Caco-2 (cell line): ENCODE measurements at regions of chr12 and their contacts with region 1.

Region 1: DNA sequence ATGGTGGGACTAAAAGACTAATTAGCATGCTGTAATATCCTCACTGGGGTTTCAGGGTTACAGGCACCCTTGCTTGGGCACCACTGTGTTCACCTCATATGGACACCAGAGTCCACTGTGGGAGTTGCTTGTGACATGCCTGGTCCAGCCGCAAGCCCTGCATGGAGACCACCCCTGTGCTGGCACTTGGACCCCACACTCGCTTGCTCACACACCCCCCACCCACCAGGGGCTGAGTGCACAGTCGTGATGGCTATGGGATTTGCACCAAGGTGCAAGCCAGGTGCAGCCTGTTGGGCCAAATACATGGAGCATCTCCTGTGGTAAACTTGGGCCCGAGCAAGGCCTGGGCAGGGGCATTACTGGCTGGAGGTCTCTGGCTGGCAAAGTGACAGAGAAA is 129.1 kb downstream of the SYT10 start:
- DNase-seq: no peak
- H3K4me3 ChIP-seq: no peak overlapping the region
- H3K4me3 Mint-ChIP-seq: no peak overlapping the region
- H3K27ac Mint-ChIP-seq: no peak overlapping the region
- H3K4me1 ChIP-seq: peaks cover 29% of the 10 kb centered on the region
- H3K4me1 Mint-ChIP-seq: peaks cover 40% of the 10 kb centered on the region
- H3K27me3 ChIP-seq: no peaks in the 10 kb centered on the region
- H3K27me3 Mint-ChIP-seq: no peaks in the 10 kb centered on the region
- CTCF ChIP-seq: no peak

Region 2: DNA sequence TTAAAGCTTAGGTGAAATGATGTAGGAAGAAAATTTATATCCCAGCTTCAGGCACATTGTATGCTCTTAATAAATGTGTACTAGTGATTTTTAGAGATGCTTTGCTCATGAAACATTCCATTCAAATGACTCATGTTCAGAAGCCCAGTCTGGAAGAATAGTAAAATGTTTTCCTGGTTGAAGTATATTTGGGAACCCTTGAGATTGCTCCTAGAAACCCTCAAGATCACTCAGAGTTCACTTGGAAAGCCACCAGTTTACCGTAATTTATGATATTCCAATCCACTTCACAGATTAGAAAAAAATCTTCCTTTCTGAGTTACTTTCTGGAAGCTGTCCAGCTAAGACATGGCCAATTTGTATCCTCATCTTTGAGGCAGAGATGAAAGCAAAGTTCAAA is 57.3 kb before region 1 on chr12:
- CTCF ChIA-PET with region 1: no interaction called
- POLR2A ChIA-PET with region 1: no interaction called
- intact Hi-C with region 1: loop called (anchors 5 kb)
- DNase-seq: no peak
- H3K4me3 ChIP-seq: no peak overlapping the region
- H3K4me3 Mint-ChIP-seq: no peak overlapping the region
- H3K27ac Mint-ChIP-seq: no peak overlapping the region
- H3K4me1 ChIP-seq: peaks cover 30% of the 10 kb centered on the region
- H3K4me1 Mint-ChIP-seq: peaks cover 13% of the 10 kb centered on the region
- H3K27me3 ChIP-seq: no peaks in the 10 kb centered on the region
- H3K27me3 Mint-ChIP-seq: no peaks in the 10 kb centered on the region
- CTCF ChIP-seq: no peak

Region 3: DNA sequence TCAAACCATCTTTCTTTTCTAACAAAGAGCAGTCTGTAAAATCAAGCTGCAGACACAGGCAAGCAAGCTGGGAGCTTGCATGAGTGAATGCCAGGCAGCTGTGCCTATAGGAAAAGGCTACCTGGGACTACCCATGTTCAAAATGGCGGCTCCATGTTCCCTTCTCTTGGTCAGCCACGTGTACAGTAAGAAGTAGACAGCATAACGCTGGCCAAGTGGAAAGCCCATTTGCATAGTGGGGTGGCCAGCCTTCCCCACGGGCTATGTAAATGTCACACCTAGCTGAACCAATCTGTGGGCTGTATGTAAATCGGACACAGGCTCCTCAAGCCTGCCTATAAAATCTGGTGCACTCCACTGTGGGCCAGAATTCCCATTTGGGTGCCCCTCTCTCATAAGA is 12.0 kb after region 1 on chr12:
- CTCF ChIA-PET with region 1: no interaction called
- POLR2A ChIA-PET with region 1: no interaction called
- intact Hi-C with region 1: no loop called
- DNase-seq: no peak
- H3K4me3 ChIP-seq: no peak overlapping the region
- H3K4me3 Mint-ChIP-seq: no peak overlapping the region
- H3K27ac Mint-ChIP-seq: no peak overlapping the region
- H3K4me1 ChIP-seq: 0 out of 2 replicates have a peak, but pooled peaks cover 3% of the 10 kb centered on the region
- H3K4me1 Mint-ChIP-seq: peaks cover 10% of the 10 kb centered on the region
- H3K27me3 ChIP-seq: no peaks in the 10 kb centered on the region
- H3K27me3 Mint-ChIP-seq: no peaks in the 10 kb centered on the region
- CTCF ChIP-seq: no peak